ENCODE measurements at regions of chr1 and their contacts with region 1.

Region 1: DNA sequence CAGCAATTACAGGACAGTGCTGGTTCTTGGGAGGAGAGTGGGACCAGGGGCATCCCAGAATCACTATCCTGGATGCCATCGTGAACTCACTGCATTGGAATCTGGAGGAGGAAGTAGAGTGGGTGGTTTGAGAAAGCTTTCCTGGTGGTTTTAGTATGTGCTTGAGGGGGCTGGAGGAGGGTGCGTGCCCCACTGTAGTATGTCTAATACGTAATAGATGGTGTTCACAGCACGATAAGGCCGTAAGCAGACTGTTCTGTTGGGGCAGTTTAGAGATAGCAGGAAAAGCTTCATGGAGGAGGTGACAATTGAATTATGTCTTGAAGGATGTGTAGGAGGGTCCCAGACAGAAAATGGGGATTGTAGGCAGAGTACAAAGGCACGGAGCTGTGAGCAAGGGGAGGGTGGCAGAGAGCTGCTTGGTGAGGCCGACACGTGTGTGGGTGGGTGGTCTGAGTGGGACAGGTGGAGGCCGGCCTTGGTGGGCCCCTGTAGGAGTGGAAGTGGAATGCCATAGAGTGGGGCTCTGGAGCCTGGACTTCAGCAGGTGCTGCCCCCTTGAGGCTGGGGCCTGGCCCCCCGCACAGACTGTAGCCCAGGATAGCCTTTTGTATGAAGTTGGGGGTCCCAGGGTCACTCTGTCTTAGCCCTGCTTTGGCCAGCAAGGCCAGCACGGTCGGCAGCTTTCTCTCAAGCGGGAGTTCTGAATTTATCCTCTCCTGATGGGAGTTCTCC is 37.0 kb downstream of the IL6R start:
- DNase-seq: no peak
- H3K4me3 Mint-ChIP-seq: no peak overlapping the region
- H3K27ac Mint-ChIP-seq: no peak overlapping the region
- H3K4me1 Mint-ChIP-seq: peaks cover 66% of the 10 kb centered on the region
- H3K27me3 Mint-ChIP-seq: peaks cover 9% of the 10 kb centered on the region

Region 2: DNA sequence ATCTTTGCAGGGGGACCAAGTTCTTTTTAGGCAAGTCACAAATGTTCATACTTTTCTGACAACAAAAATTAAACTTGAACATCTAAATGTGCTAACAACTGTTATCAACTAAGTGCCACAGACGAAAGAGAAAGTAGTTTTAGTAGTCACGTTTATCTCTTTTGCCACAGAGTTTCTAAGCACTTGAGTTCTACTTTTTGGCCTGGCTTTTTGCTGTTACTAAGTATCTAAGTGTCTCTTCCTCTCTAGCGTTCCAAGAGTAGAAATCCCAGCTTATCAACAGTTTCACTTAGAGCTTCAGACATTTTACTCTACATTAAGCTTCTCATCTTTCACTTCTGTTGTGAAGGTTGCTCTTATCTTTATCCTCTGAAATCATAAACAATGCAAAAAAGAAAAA is 553.6 kb before region 1 on chr1:
- intact Hi-C with region 1: no loop called
- DNase-seq: no peak
- H3K4me3 Mint-ChIP-seq: no peak overlapping the region
- H3K27ac Mint-ChIP-seq: peak overlapping the region; percentile 81
- H3K4me1 Mint-ChIP-seq: peaks cover 22% of the 10 kb centered on the region
- H3K27me3 Mint-ChIP-seq: no peaks in the 10 kb centered on the region

Region 3: DNA sequence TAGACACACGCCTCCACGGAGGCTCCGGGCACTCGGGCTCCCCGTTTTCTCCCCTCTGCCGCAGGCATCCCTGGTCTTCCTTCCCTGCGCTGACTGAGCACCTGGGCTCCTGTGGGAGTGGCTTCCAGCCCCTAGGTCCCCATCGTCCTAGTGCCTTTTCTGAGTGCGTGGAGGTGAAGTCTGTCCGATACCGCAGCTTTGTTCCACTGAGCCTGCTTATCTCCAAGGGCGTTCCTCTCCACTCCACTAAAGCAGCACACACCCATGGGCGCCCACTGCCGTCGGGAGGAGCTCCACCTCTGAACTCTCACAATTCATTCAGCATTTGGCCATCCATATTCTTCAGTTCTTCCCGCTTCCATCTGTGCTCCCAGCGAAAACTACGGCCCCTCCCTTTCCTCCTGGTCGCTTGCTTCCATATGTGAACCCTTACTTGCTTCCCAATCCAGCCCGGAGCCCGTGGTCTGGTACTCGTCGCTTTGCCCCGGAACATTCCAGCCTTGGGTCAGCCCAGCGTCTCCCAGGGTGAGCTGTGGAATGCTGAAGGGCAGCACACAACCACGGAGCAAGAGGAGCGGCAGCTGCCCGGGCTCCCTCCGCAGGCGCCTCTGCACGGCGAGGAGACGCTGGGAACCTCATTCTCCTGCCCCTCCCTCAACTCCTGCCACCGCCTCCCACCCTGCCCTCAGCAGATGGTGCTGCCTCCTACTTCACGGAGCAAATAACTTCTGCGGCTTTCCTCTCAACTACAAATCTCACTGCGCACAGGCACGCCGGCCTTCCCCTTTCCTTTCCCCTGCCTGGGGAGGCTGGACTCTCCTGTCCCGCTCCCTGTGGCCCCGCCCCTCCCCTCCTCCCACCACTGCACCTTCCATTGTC is 89.4 kb before region 1 on chr1:
- intact Hi-C with region 1: loop called (anchors 2 kb)
- DNase-seq: no peak
- H3K4me3 Mint-ChIP-seq: peak overlapping the region; percentile 77
- H3K27ac Mint-ChIP-seq: peak overlapping the region; percentile 29
- H3K4me1 Mint-ChIP-seq: peaks cover 22% of the 10 kb centered on the region
- H3K27me3 Mint-ChIP-seq: peaks cover 5% of the 10 kb centered on the region

Region 4: DNA sequence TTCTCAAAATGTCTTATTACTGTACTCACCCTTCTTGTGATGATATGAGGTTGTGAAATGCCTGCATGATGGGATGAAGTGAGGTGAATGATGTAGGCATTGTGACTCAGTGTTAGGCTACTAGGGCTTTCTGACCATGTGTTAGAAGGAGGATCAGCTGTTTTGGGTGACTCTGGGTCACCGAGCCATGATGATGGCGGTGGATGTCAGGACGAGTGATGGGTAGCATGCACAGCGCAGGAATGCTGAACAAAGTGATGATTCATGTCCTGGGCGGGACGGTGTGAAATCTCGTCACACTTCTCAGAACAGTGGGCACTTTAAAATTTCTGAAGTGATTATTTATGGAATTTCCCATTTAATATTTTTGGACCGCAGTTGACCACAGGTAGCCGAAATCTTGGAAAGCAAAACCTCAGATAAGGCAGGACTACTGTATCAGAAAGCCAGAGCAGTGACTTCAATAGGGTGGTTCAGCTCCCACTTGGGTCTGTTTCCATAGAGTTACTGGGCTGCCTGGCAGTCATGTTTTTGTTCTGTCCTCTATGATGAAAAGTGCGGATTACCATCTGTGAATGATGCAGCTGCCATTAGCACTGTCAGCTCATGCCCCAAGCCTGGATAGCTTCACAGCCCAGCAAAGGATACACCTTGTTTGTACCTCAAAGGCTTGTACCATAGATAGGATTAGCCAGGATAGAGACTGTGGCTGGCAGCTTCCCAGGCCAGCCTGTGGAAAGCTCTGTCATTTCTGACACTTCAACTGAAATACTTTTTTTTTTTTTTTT is 10.4 kb before region 1 on chr1:
- intact Hi-C with region 1: loop called (anchors 1 kb)
- DNase-seq: no peak
- H3K4me3 Mint-ChIP-seq: no peak overlapping the region
- H3K27ac Mint-ChIP-seq: peak overlapping the region; percentile 72
- H3K4me1 Mint-ChIP-seq: peaks cover 28% of the 10 kb centered on the region
- H3K27me3 Mint-ChIP-seq: no peaks in the 10 kb centered on the region

Region 5: DNA sequence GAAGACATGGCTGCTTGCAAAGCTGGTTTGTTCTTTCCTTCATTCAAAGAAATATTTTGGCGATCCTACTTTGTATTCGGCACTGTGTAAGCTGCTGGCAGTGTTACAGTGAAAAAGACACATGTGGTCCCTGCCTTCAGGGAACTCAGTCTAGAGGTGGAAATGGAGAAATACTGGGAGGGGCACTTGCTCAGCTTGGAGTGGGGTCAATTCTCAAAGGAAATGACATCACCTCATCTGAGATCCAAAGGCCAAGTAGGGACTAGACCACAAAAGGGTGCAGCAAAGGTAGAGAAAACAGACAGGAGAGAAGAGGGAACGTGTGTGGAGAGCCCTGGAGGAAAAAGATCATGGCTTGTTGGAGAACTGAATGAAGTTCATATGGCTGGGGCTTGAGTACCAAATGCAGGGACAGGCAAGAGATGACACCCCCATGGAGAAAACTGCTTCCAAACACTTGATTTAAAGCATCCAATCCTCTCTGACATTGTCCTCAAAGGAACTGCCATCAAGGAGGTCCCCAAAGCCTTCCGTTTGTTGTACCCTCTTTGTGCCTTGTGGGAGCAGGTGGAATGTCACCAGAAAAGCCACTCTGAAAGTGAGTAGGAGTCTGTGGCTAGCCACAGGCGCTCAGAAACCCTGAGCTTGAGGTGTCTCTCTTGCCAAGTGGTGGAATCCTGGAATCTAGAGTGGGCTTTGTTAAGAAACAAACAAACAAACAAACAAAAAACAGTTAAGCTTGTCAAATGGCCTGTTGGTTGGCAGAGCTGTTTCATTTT is 11.6 kb after region 1 on chr1:
- intact Hi-C with region 1: loop called (anchors 2 kb)
- DNase-seq: no peak
- H3K4me3 Mint-ChIP-seq: no peak overlapping the region
- H3K27ac Mint-ChIP-seq: peak overlapping the region; percentile 14
- H3K4me1 Mint-ChIP-seq: peaks cover 25% of the 10 kb centered on the region
- H3K27me3 Mint-ChIP-seq: peaks cover 30% of the 10 kb centered on the region

Region 6: GRCh38 chr1:154463512-154463990 is 21.4 kb after region 1 on chr1:
- intact Hi-C with region 1: loop called (anchors 1 kb)
- DNase-seq: peak; percentile 67
- H3K4me3 Mint-ChIP-seq: peak overlapping the region; percentile 58
- H3K27ac Mint-ChIP-seq: peak overlapping the region; percentile 81
- H3K4me1 Mint-ChIP-seq: peaks cover 65% of the 10 kb centered on the region
- H3K27me3 Mint-ChIP-seq: peaks cover 3% of the 10 kb centered on the region

Measured in activated T-helper 1 cell treated with anti-CD3 and anti-CD28 coated beads, Interleukin-12 subunit alpha, Interleukin-12 subunit beta, Interleukin-2, Interleukin-4 antibody, amounts not matched to agents 30 ng/mL and 10 ng/mL and 1 ng/mL, durations not matched to agents 14 hours and 24 hours and 36 hours (primary cell).